Ovary (tissue), 10 donors: ENCODE measurements at regions of chr2 and their contacts with region 1.

Region 1: GRCh38 chr2:134366359-134366758 is 112.5 kb downstream of the MGAT5 start:
- DNase-seq: no peak
- H3K4me3 ChIP-seq: no peak overlapping the region
- H3K27ac ChIP-seq: no peak overlapping the region
- H3K4me1 ChIP-seq: peaks cover 10% of the 10 kb centered on the region
- H3K27me3 ChIP-seq: no peaks in the 10 kb centered on the region
- CTCF ChIP-seq: no peak
- EP300 ChIP-seq: no peak
- POLR2A ChIP-seq: no peak

Region 2: GRCh38 chr2:134320930-134321329 is 45.4 kb before region 1 on chr2:
- intact Hi-C with region 1: loop called in 1 of 4 experiments (anchors 1 kb)
- DNase-seq: no peak
- H3K4me3 ChIP-seq: no peak overlapping the region
- H3K27ac ChIP-seq: no peak overlapping the region
- H3K4me1 ChIP-seq: peaks cover 3% of the 10 kb centered on the region
- H3K27me3 ChIP-seq: no peaks in the 10 kb centered on the region
- CTCF ChIP-seq: no peak
- EP300 ChIP-seq: no peak
- POLR2A ChIP-seq: no peak